Esophagus muscularis mucosa (tissue), 4 donors: ENCODE measurements at regions of chr17 and their contacts with region 1.

Region 1: DNA sequence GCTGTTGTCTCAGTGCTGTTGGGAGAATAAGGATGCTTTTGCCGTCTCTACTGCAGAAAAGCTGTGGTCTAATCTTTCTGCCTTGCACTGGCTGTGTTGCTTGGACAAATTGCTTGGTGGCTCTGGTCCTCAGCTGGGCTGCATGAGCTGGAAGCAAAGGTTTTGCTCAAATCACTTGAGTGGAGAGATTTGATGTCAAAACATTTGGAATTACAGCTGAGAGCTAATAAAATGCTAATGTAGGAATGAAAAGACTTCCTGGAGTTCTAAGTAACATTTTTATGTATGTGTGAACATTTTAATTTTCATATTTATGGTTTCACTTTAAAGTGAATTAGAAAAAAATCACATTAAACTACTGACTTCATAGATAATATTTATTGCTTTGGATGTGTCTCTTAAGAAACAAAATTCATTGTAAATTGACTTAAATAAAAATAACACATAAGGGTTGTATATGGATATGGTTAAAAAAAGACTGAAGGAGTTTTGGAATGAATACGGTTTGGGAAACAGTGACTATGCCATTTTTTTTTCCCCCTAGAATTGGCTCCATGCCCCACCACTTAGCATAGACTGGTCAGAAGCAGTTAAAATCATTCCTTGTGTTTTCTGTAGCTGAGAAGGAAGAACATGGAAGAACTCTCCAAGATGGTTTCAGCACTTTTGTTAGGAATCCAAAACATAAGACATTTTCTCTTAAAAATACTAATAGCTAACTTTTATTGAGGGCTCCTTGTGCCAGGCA is 39.2 kb upstream of the FAM20A start:
- DNase-seq: no peak
- H3K4me3 ChIP-seq: no peak overlapping the region
- H3K27ac ChIP-seq: no peak overlapping the region
- H3K4me1 ChIP-seq: peaks cover 0 to 23% (median 2%) of the 10 kb centered on the region in 4 donors
- H3K27me3 ChIP-seq: no peaks in the 10 kb centered on the region
- CTCF ChIP-seq: no peak
- EP300 ChIP-seq: no peak
- POLR2A ChIP-seq: no peak

Region 2: GRCh38 chr17:68684949-68685357 is 44.5 kb after region 1 on chr17:
- intact Hi-C with region 1: loop called (anchors 5 kb)
- DNase-seq: no peak
- H3K4me3 ChIP-seq: no peak overlapping the region
- H3K27ac ChIP-seq: peak overlapping the region in 1 of 4 donors; percentile 30
- H3K4me1 ChIP-seq: peaks cover 0 to 14% (median 2%) of the 10 kb centered on the region in 4 donors
- H3K27me3 ChIP-seq: no peaks in the 10 kb centered on the region
- CTCF ChIP-seq: no peak
- EP300 ChIP-seq: no peak
- POLR2A ChIP-seq: no peak

Region 3: GRCh38 chr17:68937890-68938514 is 297.6 kb after region 1 on chr17:
- intact Hi-C with region 1: no loop called
- DNase-seq: no peak
- H3K4me3 ChIP-seq: no peak overlapping the region
- H3K27ac ChIP-seq: no peak overlapping the region
- H3K4me1 ChIP-seq: no peaks in the 10 kb centered on the region
- H3K27me3 ChIP-seq: no peaks in the 10 kb centered on the region
- CTCF ChIP-seq: no peak
- EP300 ChIP-seq: no peak
- POLR2A ChIP-seq: no peak

Region 4: GRCh38 chr17:69344939-69345338 is 704.5 kb after region 1 on chr17:
- intact Hi-C with region 1: no loop called
- DNase-seq: no peak
- H3K4me3 ChIP-seq: no peak overlapping the region
- H3K27ac ChIP-seq: no peak overlapping the region
- H3K4me1 ChIP-seq: no peaks in the 10 kb centered on the region
- H3K27me3 ChIP-seq: no peaks in the 10 kb centered on the region
- CTCF ChIP-seq: no peak
- EP300 ChIP-seq: no peak
- POLR2A ChIP-seq: no peak